HepG2 (cell line): ENCODE measurements at regions of chr1 and their contacts with region 1.

Region 1: GRCh38 chr1:8026153-8026975 is at the start of gene ERRFI1:
- DNase-seq: peak; percentile 86
- ATAC-seq: peak; percentile 82
- H3K4me3 ChIP-seq: peak within 1 kb of the TSS; percentile 94 to 100 (median 95)
- H3K27ac ChIP-seq: peak within 1 kb of the TSS; percentile 99
- H3K4me1 ChIP-seq: peaks cover 29% of the 10 kb centered on the region
- H3K27me3 ChIP-seq: peaks cover 0 to 5% of the 10 kb centered on the region in 2 experiments; a peak in 1 of 5 replicates
- CTCF ChIP-seq: peak; percentile 21; the same call in 1 of the 2 replicates
- EP300 ChIP-seq: no peak
- POLR2A ChIP-seq: peak; percentile 95 to 97
- RAD21 ChIP-seq: peak; percentile 59
- total RNA-seq, gene ERRFI1: 84.4 and 99.5 TPM in 2 replicates

Region 2: DNA sequence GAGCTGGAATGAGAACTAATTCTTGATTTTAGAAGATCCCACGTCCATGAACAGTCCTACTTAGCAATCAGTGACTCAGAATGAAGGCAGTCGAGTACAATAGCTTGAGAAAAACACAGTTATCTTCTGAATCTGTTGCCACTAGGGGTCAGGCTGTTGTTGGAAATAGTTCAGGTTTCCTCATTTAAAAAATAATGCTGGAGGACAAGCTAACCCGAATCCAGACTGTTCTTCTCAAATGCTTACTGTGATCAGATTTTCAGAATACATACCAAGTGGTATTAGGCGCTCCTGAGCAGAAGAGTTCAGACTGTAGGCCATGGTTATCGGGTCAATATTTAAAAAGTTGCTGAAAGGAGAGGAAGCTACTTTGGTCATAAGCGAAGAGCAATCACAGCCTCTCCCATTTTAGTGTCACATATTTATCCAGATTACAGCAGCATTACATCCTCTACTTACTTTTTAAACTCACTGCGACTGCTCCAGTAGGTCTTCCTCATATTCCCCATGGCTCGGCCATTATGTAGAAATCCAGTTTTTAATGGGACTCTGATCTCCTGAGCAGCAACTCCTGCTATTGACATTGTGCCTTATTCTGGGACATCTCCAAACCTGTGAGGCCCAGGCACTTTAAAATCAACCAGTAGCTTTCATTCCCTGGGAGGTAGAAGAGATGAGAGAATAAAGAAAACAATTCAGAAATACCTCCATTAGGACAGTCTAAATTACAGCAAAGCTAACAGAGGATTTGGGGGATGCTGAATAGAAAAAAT is 11.1 kb before region 1 on chr1:
- CTCF ChIA-PET with region 1: no interaction called
- POLR2A ChIA-PET with region 1: interaction called, 99 read pairs
- in situ Hi-C with region 1: no loop called
- intact Hi-C with region 1: no loop called
- DNase-seq: peak; percentile 66
- ATAC-seq: peak; percentile 18; the same call in 2 of the 3 replicates
- H3K4me3 ChIP-seq: no peak overlapping the region; a peak in 1 of 6 replicates
- H3K27ac ChIP-seq: peak overlapping the region; percentile 28
- H3K4me1 ChIP-seq: peaks cover 80% of the 10 kb centered on the region
- H3K27me3 ChIP-seq: no peaks in the 10 kb centered on the region
- CTCF ChIP-seq: peak; percentile 50; the same call in 1 of the 2 replicates
- EP300 ChIP-seq: 0 out of 4 replicates have a peak, but pooled peaks of 1 of the 2 experiments have one; percentile 12
- POLR2A ChIP-seq: peak; percentile 40 to 45; a peak in 3 of 4 replicates
- RAD21 ChIP-seq: peak; percentile 54; the same call in 1 of the 2 replicates

Region 3: GRCh38 chr1:8083739-8084484 is 57.5 kb after region 1 on chr1:
- CTCF ChIA-PET with region 1: no interaction called
- POLR2A ChIA-PET with region 1: interaction called, 37 read pairs
- in situ Hi-C with region 1: no loop called
- intact Hi-C with region 1: loop called (anchors 5 kb)
- DNase-seq: peak; percentile 95
- ATAC-seq: peak; percentile 95
- H3K4me3 ChIP-seq: no peak overlapping the region
- H3K27ac ChIP-seq: peak overlapping the region; percentile 63
- H3K4me1 ChIP-seq: peaks cover 85% of the 10 kb centered on the region
- H3K27me3 ChIP-seq: no peaks in the 10 kb centered on the region
- CTCF ChIP-seq: no peak
- EP300 ChIP-seq: peak in 1 of 2 experiments; percentile 95; a peak in 2 of 4 replicates
- POLR2A ChIP-seq: no peak
- RAD21 ChIP-seq: no peak

Region 4: GRCh38 chr1:8154621-8155052 is 128.3 kb after region 1 on chr1:
- CTCF ChIA-PET with region 1: no interaction called
- POLR2A ChIA-PET with region 1: interaction called, 55 read pairs
- in situ Hi-C with region 1: loop called (anchors 25 kb)
- intact Hi-C with region 1: loop called (anchors 10 kb)
- DNase-seq: peak; percentile 99
- ATAC-seq: peak; percentile 97
- H3K4me3 ChIP-seq: peak overlapping the region in 2 of 3 experiments; percentile 15 to 31; a peak in 2 of 6 replicates
- H3K27ac ChIP-seq: peak overlapping the region; percentile 88
- H3K4me1 ChIP-seq: peaks cover 82% of the 10 kb centered on the region
- H3K27me3 ChIP-seq: no peaks in the 10 kb centered on the region
- CTCF ChIP-seq: no peak
- EP300 ChIP-seq: peak; percentile 89 to 97; a peak in 3 of 4 replicates
- POLR2A ChIP-seq: peak in 1 of 2 experiments; percentile 16; a peak in 1 of 4 replicates
- RAD21 ChIP-seq: peak; percentile 44; the same call in 1 of the 2 replicates

Region 5: DNA sequence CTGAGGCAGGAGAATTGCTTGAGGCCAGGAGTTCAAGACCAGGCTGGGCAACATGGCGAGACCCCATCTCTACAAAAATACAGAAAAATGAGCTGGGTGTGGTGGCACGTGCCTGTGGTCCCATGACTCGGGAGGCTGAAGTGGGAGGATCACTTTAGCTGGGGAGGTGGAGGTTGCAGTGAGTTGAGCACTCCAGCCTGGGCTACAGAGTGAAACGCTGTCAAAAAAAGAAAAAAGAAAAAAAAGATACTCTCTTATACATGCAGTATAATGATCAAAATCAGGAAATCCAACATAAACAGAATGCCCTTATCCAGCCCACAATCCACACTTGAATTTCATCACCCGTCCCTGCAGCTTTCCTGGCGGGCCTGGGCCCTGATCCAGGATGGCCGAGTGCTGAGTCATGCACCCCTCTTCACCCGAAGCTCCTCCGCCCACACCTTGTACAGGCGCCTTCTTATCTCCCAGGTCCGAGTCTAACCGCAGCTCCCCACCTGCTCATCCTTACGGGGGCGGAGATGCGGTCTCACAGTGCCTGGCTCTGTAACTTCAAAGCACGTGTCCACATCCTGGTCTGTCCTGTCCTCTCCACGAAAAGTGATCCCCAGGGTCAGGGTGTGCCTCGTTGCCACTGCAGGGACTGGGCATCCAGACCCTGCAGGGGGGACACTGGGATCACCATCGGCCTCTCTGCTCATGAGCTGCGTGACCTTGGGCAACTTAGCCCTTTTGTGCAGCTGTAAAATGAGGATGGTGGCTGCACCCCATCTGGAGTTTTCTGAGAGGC is 171.3 kb after region 1 on chr1:
- CTCF ChIA-PET with region 1: no interaction called
- POLR2A ChIA-PET with region 1: interaction called, 21 read pairs
- in situ Hi-C with region 1: no loop called
- intact Hi-C with region 1: no loop called
- DNase-seq: peak; percentile 83
- ATAC-seq: peak; percentile 35
- H3K4me3 ChIP-seq: no peak overlapping the region
- H3K27ac ChIP-seq: peak overlapping the region; percentile 61
- H3K4me1 ChIP-seq: peaks cover 91% of the 10 kb centered on the region
- H3K27me3 ChIP-seq: no peaks in the 10 kb centered on the region
- CTCF ChIP-seq: 0 out of 2 replicates have a peak, but pooled peaks have one; percentile 3
- EP300 ChIP-seq: peak; percentile 71 to 95; a peak in 3 of 4 replicates
- POLR2A ChIP-seq: no peak
- RAD21 ChIP-seq: no peak

Region 6: DNA sequence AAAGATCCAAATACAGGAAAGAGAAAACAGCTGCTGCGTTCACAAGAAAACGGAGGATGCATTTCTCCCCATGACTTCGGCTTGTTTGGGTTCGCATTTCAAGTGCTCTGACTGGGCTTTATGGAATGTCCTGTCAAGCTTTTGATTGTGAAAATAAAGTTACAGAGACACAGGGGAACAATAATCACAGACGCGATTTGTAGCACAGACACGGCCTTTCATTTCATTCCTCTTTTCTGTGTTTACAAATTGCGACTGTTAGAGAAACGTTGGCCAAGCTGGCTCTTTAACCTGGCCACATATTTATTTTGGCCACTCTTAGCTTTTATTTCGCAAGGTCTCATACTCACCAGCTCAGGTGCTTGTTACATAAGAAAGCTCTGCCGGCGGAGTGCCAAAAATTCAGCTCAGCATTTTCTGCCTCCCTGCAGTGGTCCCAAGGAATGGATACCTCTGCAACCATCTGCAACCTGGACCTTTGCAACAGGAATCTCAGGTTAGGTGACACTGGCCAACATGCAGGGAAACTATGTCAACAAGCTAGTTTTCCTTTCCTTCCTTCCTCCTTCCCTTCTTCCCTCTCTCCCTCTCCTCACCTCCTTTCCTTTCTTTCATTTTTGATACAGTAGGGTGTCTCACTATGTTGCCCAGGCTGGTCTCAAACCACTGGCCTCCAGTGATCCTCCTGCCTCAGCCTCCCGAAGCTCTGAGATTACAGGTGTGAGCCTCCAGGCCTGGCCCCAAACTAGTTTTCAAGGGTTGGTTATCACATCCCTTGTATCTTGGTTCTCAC is 233.3 kb after region 1 on chr1:
- CTCF ChIA-PET with region 1: no interaction called
- POLR2A ChIA-PET with region 1: interaction called, 23 read pairs
- in situ Hi-C with region 1: no loop called
- intact Hi-C with region 1: loop called (anchors 1 kb)
- DNase-seq: peak; percentile 89
- ATAC-seq: peak; percentile 69
- H3K4me3 ChIP-seq: peak overlapping the region; percentile 31 to 53 (median 32)
- H3K27ac ChIP-seq: peak overlapping the region; percentile 91
- H3K4me1 ChIP-seq: peaks cover 74% of the 10 kb centered on the region
- H3K27me3 ChIP-seq: no peaks in the 10 kb centered on the region
- CTCF ChIP-seq: no peak
- EP300 ChIP-seq: peak; percentile 24 to 89; a peak in 3 of 4 replicates
- POLR2A ChIP-seq: no peak
- RAD21 ChIP-seq: no peak